Activated B cell treated with CpG ODN at 0.5 μM for 24 hours (primary cell): ENCODE measurements at regions of chr2 and their contacts with region 1.

Region 1: GRCh38 chr2:55168221-55169154 is 63.6 kb downstream of the CLHC1 start:
- DNase-seq: no peak
- ATAC-seq: peak; percentile 45
- H3K4me3 Mint-ChIP-seq: no peak overlapping the region
- H3K27ac Mint-ChIP-seq: no peak overlapping the region
- H3K4me1 Mint-ChIP-seq: no peaks in the 10 kb centered on the region
- H3K27me3 Mint-ChIP-seq: no peaks in the 10 kb centered on the region
- CTCF ChIP-seq: no peak

Region 2: GRCh38 chr2:54149638-54150441 is 1018.6 kb before region 1 on chr2:
- CTCF ChIA-PET with region 1: no interaction called
- POLR2A ChIA-PET with region 1: no interaction called
- intact Hi-C with region 1: no loop called
- DNase-seq: no peak
- ATAC-seq: no peak
- H3K4me3 Mint-ChIP-seq: no peak overlapping the region
- H3K27ac Mint-ChIP-seq: no peak overlapping the region
- H3K4me1 Mint-ChIP-seq: no peaks in the 10 kb centered on the region
- H3K27me3 Mint-ChIP-seq: no peaks in the 10 kb centered on the region
- CTCF ChIP-seq: no peak

Region 3: GRCh38 chr2:54657664-54658083 is 510.8 kb before region 1 on chr2:
- CTCF ChIA-PET with region 1: interaction called, 4 read pairs
- POLR2A ChIA-PET with region 1: no interaction called
- intact Hi-C with region 1: loop called (anchors 5 kb)
- DNase-seq: no peak
- ATAC-seq: peak; percentile 73
- H3K4me3 Mint-ChIP-seq: no peak overlapping the region
- H3K27ac Mint-ChIP-seq: peak overlapping the region; percentile 46
- H3K4me1 Mint-ChIP-seq: no peaks in the 10 kb centered on the region
- H3K27me3 Mint-ChIP-seq: no peaks in the 10 kb centered on the region
- CTCF ChIP-seq: no peak

Region 4: GRCh38 chr2:54899576-54900200 is 268.8 kb before region 1 on chr2:
- CTCF ChIA-PET with region 1: interaction called, 51 read pairs
- POLR2A ChIA-PET with region 1: no interaction called
- intact Hi-C with region 1: loop called (anchors 1 kb)
- DNase-seq: no peak
- ATAC-seq: no peak
- H3K4me3 Mint-ChIP-seq: no peak overlapping the region
- H3K27ac Mint-ChIP-seq: no peak overlapping the region
- H3K4me1 Mint-ChIP-seq: no peaks in the 10 kb centered on the region
- H3K27me3 Mint-ChIP-seq: no peaks in the 10 kb centered on the region
- CTCF ChIP-seq: no peak

Region 5: GRCh38 chr2:55014962-55015939 is 153.2 kb before region 1 on chr2:
- CTCF ChIA-PET with region 1: interaction called, 96 read pairs
- POLR2A ChIA-PET with region 1: interaction called, 4 read pairs
- intact Hi-C with region 1: loop called (anchors 1 kb)
- DNase-seq: no peak
- ATAC-seq: no peak
- H3K4me3 Mint-ChIP-seq: no peak overlapping the region
- H3K27ac Mint-ChIP-seq: no peak overlapping the region
- H3K4me1 Mint-ChIP-seq: peaks cover 52% of the 10 kb centered on the region
- H3K27me3 Mint-ChIP-seq: no peaks in the 10 kb centered on the region
- CTCF ChIP-seq: peak; percentile 49

Region 6: DNA sequence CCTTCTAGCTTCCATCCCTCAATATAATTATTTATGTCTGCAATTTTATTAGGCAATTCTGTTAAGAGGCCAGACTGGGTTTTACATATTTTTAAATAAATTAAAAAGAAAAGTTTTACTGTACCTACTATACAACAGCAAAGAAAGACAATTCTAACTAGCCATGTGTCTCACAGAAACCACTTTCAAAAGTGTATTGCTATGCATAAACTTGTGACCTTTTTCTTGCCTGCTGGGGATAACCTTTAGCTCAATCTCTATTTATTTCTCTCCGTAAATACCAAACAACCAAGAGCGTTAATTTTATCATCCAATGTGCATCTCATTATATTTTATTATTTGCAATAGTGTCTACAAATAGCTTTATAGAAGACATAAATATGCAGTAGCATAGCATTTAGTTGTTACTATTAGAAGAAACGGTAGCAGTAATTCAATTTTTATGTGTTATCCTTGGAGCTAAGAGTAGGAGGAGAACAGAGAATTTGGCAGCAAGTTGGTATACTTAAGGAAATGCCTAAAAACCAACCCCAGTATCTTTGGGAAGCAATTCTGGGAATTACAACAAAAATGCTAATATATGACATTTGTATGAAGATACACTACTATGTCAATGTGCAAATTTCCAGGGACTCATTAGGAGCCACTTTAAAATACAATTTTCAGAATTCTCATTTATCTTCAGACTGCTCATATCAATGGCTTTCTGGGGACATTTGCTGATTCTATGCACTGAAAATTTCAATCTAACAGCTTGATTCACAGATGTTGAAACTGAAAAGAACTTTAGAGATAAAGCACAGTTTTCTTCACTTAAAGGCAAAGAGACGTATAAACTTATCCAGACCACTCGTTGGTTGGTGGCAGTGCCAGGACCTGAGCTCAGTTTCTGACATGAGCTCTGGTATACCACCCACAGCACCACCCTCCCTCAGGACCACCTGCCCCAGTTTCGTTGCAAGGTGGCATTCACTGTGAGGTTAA is 95.2 kb before region 1 on chr2:
- CTCF ChIA-PET with region 1: interaction called, 3 read pairs
- POLR2A ChIA-PET with region 1: no interaction called
- intact Hi-C with region 1: loop called (anchors 1 kb)
- DNase-seq: no peak
- ATAC-seq: no peak
- H3K4me3 Mint-ChIP-seq: no peak overlapping the region
- H3K27ac Mint-ChIP-seq: no peak overlapping the region
- H3K4me1 Mint-ChIP-seq: no peaks in the 10 kb centered on the region
- H3K27me3 Mint-ChIP-seq: peaks cover 3% of the 10 kb centered on the region
- CTCF ChIP-seq: no peak

Region 7: GRCh38 chr2:55929476-55929875 is 761.0 kb after region 1 on chr2:
- CTCF ChIA-PET with region 1: no interaction called
- POLR2A ChIA-PET with region 1: no interaction called
- intact Hi-C with region 1: no loop called
- DNase-seq: no peak
- ATAC-seq: no peak
- H3K4me3 Mint-ChIP-seq: no peak overlapping the region
- H3K27ac Mint-ChIP-seq: no peak overlapping the region
- H3K4me1 Mint-ChIP-seq: no peaks in the 10 kb centered on the region
- H3K27me3 Mint-ChIP-seq: peaks cover 16% of the 10 kb centered on the region
- CTCF ChIP-seq: no peak